ENCODE measurements at regions of chr2 and their contacts with region 1.

Region 1: GRCh38 chr2:27370026-27370815 is at the starts of genes EIF2B4 and SNX17:
- DNase-seq: peak; percentile 100
- H3K4me3 Mint-ChIP-seq: peak within 1 kb of the TSS; percentile 83
- H3K27ac Mint-ChIP-seq: peak within 1 kb of the TSS; percentile 95
- H3K4me1 Mint-ChIP-seq: peaks cover 30% of the 10 kb centered on the region
- H3K27me3 Mint-ChIP-seq: no peaks in the 10 kb centered on the region
- total RNA-seq, gene EIF2B4: 24.4 to 25.2 TPM
- total RNA-seq, gene SNX17: 68.5 to 75.5 TPM

Region 2: GRCh38 chr2:27050281-27050995 is 319.8 kb before region 1 on chr2:
- CTCF ChIA-PET with region 1: no interaction called
- intact Hi-C with region 1: loop called (anchors 1 kb)
- DNase-seq: peak; percentile 97
- H3K4me3 Mint-ChIP-seq: peak overlapping the region; percentile 86
- H3K27ac Mint-ChIP-seq: peak overlapping the region; percentile 97
- H3K4me1 Mint-ChIP-seq: peaks cover 16% of the 10 kb centered on the region
- H3K27me3 Mint-ChIP-seq: peaks cover 6% of the 10 kb centered on the region

Region 3: GRCh38 chr2:27211829-27212627 is 158.2 kb before region 1 on chr2 and contains the starts of genes ATRAID and SLC5A6:
- CTCF ChIA-PET with region 1: no interaction called
- intact Hi-C with region 1: loop called (anchors 1 kb)
- DNase-seq: peak; percentile 88
- H3K4me3 Mint-ChIP-seq: peak within 1 kb of the TSS; percentile 98
- H3K27ac Mint-ChIP-seq: peak within 1 kb of the TSS; percentile 99
- H3K4me1 Mint-ChIP-seq: peaks cover 29% of the 10 kb centered on the region
- H3K27me3 Mint-ChIP-seq: no peaks in the 10 kb centered on the region
- total RNA-seq, gene ATRAID: 80.5 to 80.8 TPM
- total RNA-seq, gene SLC5A6: 22.6 to 24.8 TPM

Region 4: DNA sequence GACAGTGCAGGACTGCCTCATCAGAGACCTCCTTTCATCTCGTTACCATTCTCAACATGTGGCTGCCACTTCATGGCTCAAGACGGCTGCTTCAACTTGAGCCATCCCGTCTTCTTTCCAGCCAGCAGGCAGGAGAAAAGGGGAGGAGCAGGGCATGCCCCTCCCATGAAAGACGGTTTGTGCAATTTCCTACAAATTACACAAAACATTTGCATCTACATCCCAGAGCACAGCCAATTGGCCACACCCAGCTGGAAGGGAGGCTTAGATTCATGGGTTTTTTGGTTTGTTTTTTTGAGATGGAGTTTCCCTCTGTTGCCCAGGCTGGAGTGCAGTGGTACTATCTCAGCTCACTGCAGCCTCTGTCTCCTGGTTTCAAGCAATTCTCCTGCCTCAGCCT is 73.7 kb before region 1 on chr2:
- CTCF ChIA-PET with region 1: no interaction called
- intact Hi-C with region 1: no loop called
- DNase-seq: no peak
- H3K4me3 Mint-ChIP-seq: no peak overlapping the region
- H3K27ac Mint-ChIP-seq: no peak overlapping the region
- H3K4me1 Mint-ChIP-seq: no peaks in the 10 kb centered on the region
- H3K27me3 Mint-ChIP-seq: peaks cover 2% of the 10 kb centered on the region

Region 5: GRCh38 chr2:27356382-27357181 is 13.6 kb before region 1 on chr2 and contains the start of gene GTF3C2:
- CTCF ChIA-PET with region 1: interaction called, 22 read pairs
- intact Hi-C with region 1: loop called (anchors 1 kb)
- DNase-seq: peak; percentile 94
- H3K4me3 Mint-ChIP-seq: peak within 1 kb of the TSS; percentile 99
- H3K27ac Mint-ChIP-seq: peak within 1 kb of the TSS; percentile 99
- H3K4me1 Mint-ChIP-seq: peaks cover 59% of the 10 kb centered on the region
- H3K27me3 Mint-ChIP-seq: no peaks in the 10 kb centered on the region
- total RNA-seq, gene GTF3C2: 62.9 to 72.3 TPM

Region 6: DNA sequence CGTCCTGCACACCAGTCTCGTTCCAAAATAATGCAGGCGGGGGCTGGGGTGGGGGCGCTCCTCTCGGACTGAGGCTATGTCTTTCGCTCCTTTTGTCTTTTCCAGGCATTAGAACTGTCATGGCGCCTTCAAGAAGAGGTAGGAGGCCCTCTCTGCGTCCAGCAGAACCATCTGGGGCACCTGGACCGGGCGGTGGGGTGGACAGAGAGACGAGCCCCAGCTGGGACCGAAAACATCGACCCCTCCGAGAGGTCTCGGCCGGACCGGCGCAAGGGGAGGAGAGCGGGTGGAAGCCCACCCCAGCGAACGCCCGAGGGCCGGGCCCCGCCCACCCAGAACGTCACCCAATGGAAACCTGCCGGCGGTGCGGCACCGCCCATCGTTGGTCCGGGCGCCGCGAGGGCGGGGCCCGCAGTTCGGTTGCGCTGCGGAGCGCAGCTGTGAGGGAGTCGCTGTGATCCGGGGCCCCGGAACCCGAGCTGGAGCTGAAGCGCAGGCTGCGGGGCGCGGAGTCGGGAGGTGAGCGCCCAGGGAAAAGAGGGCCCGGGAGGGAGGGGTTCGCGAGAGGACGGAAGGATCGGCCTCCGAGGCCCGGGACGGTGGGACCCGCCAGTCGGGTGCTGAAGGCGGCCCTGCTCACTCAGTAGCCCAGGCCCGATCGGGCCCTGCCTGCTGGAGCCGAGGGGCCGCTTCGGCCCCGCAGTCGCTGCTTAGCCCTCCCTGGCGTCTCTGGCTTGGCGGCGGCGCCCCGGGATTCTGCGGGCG is 58.2 kb after region 1 on chr2 and contains the start of gene NRBP1:
- CTCF ChIA-PET with region 1: interaction called, 11 read pairs
- intact Hi-C with region 1: loop called (anchors 1 kb)
- DNase-seq: peak; percentile 94
- H3K4me3 Mint-ChIP-seq: peak within 1 kb of the TSS; percentile 98
- H3K27ac Mint-ChIP-seq: peak within 1 kb of the TSS; percentile 94
- H3K4me1 Mint-ChIP-seq: peaks cover 31% of the 10 kb centered on the region
- H3K27me3 Mint-ChIP-seq: no peaks in the 10 kb centered on the region
- total RNA-seq, gene NRBP1: 60.0 to 63.3 TPM

Region 7: DNA sequence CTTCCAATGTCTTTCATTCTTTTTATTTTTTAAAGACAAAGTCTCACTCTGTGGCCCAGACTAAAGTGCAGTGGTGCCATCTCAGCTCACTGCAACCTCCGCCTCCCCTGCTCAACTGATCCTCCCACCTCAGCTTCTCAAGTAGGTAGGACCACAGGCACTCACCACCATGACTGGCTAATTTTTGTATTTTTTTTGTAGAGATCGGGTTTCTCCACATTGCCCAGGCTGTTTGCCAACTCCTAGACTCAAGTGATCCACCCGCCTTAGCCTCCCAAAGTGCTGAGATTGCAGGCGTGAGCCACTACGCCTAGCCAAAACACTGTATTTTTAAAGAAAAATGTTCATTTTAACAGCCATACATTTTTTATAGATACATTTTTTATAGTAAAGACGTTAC is 139.1 kb after region 1 on chr2:
- CTCF ChIA-PET with region 1: no interaction called
- intact Hi-C with region 1: no loop called
- DNase-seq: no peak
- H3K4me3 Mint-ChIP-seq: no peak overlapping the region
- H3K27ac Mint-ChIP-seq: no peak overlapping the region
- H3K4me1 Mint-ChIP-seq: no peaks in the 10 kb centered on the region
- H3K27me3 Mint-ChIP-seq: no peaks in the 10 kb centered on the region

Region 8: GRCh38 chr2:27628767-27629709 is 258.8 kb after region 1 on chr2 and contains the starts of genes CCDC121 and GPN1:
- CTCF ChIA-PET with region 1: interaction called, 5 read pairs
- intact Hi-C with region 1: loop called (anchors 2 kb)
- DNase-seq: peak; percentile 98
- H3K4me3 Mint-ChIP-seq: no peak within 1 kb of the TSS
- H3K27ac Mint-ChIP-seq: peak within 1 kb of the TSS; percentile 52
- H3K4me1 Mint-ChIP-seq: peaks cover 13% of the 10 kb centered on the region
- H3K27me3 Mint-ChIP-seq: no peaks in the 10 kb centered on the region
- total RNA-seq, gene CCDC121: 0.17 to 0.30 TPM
- total RNA-seq, gene GPN1: 44.9 to 45.1 TPM